ENCODE measurements at regions of chr2 and their contacts with region 1.

Region 1: DNA sequence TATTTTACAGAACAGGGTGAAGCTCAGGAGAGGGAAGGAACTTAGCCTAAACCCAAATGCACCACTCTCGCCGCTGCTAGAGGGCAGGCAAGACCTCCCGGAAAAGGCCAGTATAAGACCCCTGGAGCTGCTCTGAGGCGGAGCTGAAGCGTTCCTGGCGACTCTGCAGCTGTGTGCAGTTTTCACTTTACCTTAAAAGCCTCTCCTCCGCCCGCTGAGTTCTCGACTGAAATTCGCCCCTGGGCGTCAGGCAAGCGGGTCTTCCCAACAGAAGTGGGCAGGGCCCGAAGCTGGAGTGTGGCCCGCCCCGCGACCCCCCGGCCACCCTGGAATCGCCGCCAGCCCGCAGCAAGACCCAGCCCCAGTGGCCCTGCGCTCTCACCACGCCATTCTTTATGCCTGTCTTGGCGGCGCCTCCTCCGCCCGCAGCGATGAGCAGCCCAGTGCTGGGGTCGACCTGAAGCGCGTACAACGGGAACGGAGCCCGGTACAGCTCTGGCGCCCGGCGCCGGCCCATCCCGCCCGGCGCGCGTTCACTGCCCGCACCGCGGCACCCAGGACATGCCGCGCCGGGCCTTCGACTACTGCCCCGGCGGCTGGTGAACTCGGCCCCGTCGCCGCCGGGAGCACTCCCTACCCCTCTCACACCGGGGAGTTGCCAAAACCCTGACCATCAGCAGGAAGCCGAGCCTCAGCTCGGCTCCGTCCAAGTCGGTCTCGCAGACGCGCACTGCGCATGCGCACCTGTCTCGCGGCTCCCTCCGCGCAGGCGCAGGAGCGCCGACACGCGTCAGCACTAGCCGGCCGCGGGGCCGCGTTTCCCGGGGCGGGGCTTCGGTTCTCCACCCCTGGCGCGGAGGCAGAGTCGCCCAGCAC is at the start of gene PREB:
- DNase-seq: peak; percentile 92 to 100 (median 97)
- ATAC-seq: peak; percentile 97
- H3K4me3 ChIP-seq: peak within 1 kb of the TSS; percentile 96
- H3K4me3 Mint-ChIP-seq: peak within 1 kb of the TSS; percentile 88 to 97 (median 92)
- H3K27ac ChIP-seq: peak within 1 kb of the TSS; percentile 97
- H3K27ac Mint-ChIP-seq: peak within 1 kb of the TSS; percentile 88 to 99 (median 97)
- H3K4me1 ChIP-seq: peaks cover 12 to 13% of the 10 kb centered on the region in 2 donors
- H3K4me1 Mint-ChIP-seq: peaks cover 10 to 32% (median 21%) of the 10 kb centered on the region in 7 donors
- H3K27me3 ChIP-seq: no peaks in the 10 kb centered on the region
- H3K27me3 Mint-ChIP-seq: peaks cover 0 to 6% (median 0%) of the 10 kb centered on the region in 5 donors
- total RNA-seq, gene PREB: 25.4 to 72.3 (median 53.2) TPM

Region 2: DNA sequence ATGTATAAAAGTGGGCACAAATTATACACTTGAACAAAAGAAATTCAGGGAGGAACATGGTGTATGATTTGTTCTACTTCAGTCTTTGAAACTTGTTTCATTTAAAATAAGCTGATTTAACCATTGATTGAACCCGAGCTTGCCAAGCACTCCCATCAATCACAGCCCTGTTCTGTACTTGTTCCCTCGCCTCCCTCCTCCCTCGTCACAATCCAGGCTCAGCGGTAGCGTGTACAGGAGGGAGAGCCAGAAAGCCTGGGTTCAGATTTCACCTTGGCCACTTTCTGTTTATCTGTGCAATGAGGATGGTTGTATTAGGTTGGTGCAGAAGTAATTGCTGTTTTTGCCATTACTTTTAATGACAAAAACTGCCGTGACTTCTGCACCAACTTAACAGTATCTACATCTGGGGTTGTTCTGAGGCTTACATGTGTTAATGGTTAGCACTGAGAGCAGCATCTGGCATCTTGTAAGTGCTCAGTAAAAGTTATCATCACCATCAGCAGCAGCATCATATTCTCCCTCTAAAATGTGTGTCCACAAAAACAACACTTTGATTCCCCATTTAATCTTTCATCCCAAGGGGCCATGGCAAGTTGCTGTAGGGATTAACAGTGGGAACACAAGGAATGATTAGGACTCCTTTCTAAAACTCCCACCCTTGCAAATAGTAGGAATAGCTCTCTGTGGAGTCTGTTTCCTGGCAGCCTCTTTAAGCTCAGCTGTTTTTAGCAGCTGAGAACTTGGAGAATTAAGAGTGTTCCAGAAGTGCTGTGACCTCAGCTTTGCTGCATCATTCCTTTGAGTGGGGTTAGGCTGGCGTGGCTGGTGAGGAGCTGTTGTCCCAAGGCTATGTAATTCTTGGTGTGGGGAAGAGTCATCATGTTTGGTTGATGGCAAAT is 281.5 kb before region 1 on chr2:
- CTCF ChIA-PET with region 1: no interaction called
- POLR2A ChIA-PET with region 1: no interaction called
- intact Hi-C with region 1: no loop called
- DNase-seq: no peak
- ATAC-seq: no peak
- H3K4me3 ChIP-seq: no peak overlapping the region
- H3K4me3 Mint-ChIP-seq: no peak overlapping the region
- H3K27ac ChIP-seq: no peak overlapping the region
- H3K27ac Mint-ChIP-seq: no peak overlapping the region
- H3K4me1 ChIP-seq: peaks cover 0 to 11% of the 10 kb centered on the region in 2 donors
- H3K4me1 Mint-ChIP-seq: peaks cover 0 to 14% (median 7%) of the 10 kb centered on the region in 7 donors
- H3K27me3 ChIP-seq: peaks cover 0 to 9% of the 10 kb centered on the region in 2 donors
- H3K27me3 Mint-ChIP-seq: peaks cover 33 to 61% (median 43%) of the 10 kb centered on the region in 5 donors

Region 3: DNA sequence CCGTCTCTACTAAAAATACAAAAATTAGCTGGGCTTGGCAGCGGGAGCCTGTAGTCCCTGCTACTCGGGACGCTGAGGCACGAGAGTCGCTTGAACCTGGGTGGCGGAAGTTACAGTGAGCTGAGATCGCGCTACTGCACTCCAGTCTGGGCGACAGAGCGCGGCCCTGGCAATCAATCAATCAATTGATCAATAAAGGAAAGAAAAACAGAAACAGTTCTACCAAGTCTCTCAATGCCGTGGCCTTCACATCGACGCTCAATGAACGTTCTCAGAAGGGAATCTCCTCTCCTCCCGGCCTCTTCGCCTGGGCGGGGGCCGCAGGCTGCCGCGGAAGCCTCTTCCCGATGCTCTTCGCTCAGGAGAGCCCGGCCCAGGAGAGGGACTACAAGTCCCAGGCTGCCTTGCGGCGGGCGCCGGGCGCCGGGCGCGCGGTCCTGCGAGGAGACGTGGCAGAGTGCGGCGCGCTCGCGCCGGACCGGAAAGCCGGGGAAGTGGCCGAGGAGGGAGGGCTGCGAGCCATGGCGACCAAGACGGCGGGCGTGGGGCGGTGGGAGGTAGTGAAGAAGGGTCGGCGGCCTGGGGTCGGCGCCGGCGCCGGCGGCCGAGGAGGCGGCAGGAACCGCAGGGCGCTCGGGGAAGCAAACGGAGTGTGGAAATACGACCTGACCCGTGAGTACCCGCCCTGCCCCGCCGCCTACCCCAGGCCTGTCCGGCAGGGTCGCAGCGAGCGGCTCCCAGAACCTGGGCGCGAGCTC is 101.5 kb before region 1 on chr2 and contains the start of gene TMEM214:
- CTCF ChIA-PET with region 1: no interaction called
- POLR2A ChIA-PET with region 1: no interaction called
- intact Hi-C with region 1: loop called in 1 of 2 experiments (anchors 2 kb)
- DNase-seq: peak; percentile 54 to 88 (median 63)
- ATAC-seq: peak; percentile 97
- H3K4me3 ChIP-seq: peak within 1 kb of the TSS; percentile 99
- H3K4me3 Mint-ChIP-seq: peak within 1 kb of the TSS; percentile 91 to 97 (median 93)
- H3K27ac ChIP-seq: peak within 1 kb of the TSS; percentile 87
- H3K27ac Mint-ChIP-seq: peak within 1 kb of the TSS; percentile 84 to 95 (median 91)
- H3K4me1 ChIP-seq: peaks cover 11 to 19% of the 10 kb centered on the region in 2 donors
- H3K4me1 Mint-ChIP-seq: peaks cover 24 to 63% (median 41%) of the 10 kb centered on the region in 7 donors
- H3K27me3 ChIP-seq: no peaks in the 10 kb centered on the region
- H3K27me3 Mint-ChIP-seq: no peaks in the 10 kb centered on the region
- total RNA-seq, gene TMEM214: 36.7 to 114 (median 67.5) TPM

Region 4: GRCh38 chr2:27071277-27071989 is 62.7 kb before region 1 on chr2 and contains the start of gene OST4:
- CTCF ChIA-PET with region 1: no interaction called
- POLR2A ChIA-PET with region 1: interaction called, 3 read pairs
- intact Hi-C with region 1: loop called in 1 of 2 experiments (anchors 1 kb)
- DNase-seq: peak; percentile 81 to 97 (median 87)
- ATAC-seq: peak; percentile 96
- H3K4me3 ChIP-seq: peak within 1 kb of the TSS; percentile 83
- H3K4me3 Mint-ChIP-seq: peak within 1 kb of the TSS; percentile 96 to 99 (median 97)
- H3K27ac ChIP-seq: peak within 1 kb of the TSS; percentile 97
- H3K27ac Mint-ChIP-seq: peak within 1 kb of the TSS; percentile 93 to 98 (median 97)
- H3K4me1 ChIP-seq: peaks cover 29 to 41% of the 10 kb centered on the region in 2 donors
- H3K4me1 Mint-ChIP-seq: peaks cover 57 to 86% (median 76%) of the 10 kb centered on the region in 7 donors
- H3K27me3 ChIP-seq: no peaks in the 10 kb centered on the region
- H3K27me3 Mint-ChIP-seq: no peaks in the 10 kb centered on the region
- total RNA-seq, gene OST4: 241 to 398 (median 263) TPM

Region 5: DNA sequence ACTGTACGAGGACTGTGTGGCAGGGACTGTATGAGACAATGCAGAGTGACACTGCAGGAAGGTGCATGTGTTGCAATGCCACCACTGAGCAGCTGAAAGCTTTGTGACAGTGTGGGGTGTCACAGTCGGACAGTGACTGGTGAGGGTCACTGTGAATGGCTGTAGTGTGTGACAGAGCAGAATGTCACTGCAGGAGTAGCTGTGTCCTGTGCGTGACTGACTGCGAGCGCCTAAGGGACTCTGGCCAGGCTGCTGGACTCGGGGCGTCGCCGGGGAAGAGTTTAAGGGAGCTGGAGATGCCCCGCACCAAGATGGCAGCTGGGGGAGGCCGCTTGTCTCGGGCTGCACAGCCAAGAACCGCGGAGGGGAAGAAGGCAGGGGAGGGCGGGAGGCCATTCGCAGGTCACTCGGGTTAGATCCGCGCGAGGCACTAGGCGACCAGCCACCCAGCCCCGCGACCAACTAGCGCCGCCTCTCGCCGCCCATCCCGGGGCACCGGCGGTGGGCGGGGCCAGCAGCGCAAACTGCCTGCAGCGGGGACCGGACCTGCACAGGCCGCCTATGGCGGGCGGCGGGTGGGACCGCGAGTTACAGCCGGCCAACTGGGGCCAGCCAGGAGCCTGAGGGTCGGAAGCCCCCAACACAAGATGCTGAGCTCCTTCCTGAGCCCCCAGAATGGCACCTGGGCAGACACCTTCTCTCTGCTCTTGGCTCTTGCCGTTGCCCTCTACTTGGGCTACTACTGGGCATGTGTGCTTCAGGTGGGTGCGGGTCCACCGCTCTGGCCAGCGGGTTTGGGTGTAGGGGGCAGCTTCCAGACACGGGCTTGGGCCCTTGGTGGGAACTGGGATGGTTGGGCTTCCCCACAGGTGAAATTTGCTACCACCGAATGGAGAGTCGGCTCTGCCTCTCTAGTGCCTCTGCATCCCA is 10.6 kb before region 1 on chr2 and contains the start of gene ABHD1:
- CTCF ChIA-PET with region 1: interaction called, 4 read pairs
- POLR2A ChIA-PET with region 1: interaction called, 49 read pairs
- intact Hi-C with region 1: loop called (anchors 1 kb)
- DNase-seq: peak; percentile 37 to 79 (median 51)
- ATAC-seq: peak; percentile 84
- H3K4me3 ChIP-seq: peak within 1 kb of the TSS; percentile 59
- H3K4me3 Mint-ChIP-seq: peak within 1 kb of the TSS; percentile 83 to 95 (median 92)
- H3K27ac ChIP-seq: peak within 1 kb of the TSS; percentile 61
- H3K27ac Mint-ChIP-seq: peak within 1 kb of the TSS; percentile 78 to 89 (median 86)
- H3K4me1 ChIP-seq: peaks cover 5 to 11% of the 10 kb centered on the region in 2 donors
- H3K4me1 Mint-ChIP-seq: peaks cover 10 to 30% (median 20%) of the 10 kb centered on the region in 7 donors
- H3K27me3 ChIP-seq: peaks cover 0 to 3% of the 10 kb centered on the region in 2 donors
- H3K27me3 Mint-ChIP-seq: peaks cover 11 to 40% (median 14%) of the 10 kb centered on the region in 5 donors
- total RNA-seq, gene ABHD1: 0.53 to 2.0 (median 1.5) TPM

Region 6: DNA sequence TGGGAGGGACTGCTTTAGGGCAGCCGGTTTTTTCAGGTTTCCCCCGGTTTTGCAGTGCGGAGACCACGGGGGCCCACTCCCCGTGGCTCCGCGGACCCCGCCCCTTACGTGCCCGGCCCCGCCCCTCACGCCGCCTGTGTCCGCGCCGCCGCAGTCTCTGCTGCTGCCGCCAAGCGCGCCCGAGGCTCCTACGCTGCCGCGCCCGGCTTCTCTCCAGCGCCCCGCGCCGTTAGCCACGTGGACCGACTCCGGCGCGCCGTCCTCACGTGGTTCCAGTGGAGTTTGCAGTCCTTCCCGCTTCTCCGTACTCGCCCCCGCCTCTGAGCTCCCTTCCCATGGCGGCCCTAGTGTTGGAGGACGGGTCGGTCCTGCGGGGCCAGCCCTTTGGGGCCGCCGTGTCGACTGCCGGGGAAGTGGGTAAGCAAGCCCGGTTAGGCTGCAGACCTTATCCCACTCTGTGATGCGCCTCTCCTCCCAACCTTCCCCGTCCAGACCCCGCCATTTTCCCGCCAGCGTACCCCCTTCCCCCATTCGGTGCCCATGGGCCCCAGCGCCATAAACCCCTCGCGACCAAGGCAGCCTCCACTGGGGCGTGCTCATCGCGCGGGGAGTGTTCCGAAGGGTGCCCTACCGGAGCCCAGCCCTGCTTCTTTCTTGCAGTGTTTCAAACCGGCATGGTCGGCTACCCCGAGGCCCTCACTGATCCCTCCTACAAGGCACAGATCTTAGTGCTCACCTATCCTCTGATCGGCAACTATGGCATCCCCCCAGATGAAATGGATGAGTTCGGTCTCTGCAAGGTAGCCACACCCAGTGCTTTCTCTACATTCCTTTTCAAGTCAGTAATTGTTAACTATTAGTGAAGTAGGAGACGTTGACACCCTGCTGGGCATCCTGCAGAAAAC is 83.3 kb after region 1 on chr2 and contains the start of gene CAD:
- CTCF ChIA-PET with region 1: interaction called, 4 read pairs
- POLR2A ChIA-PET with region 1: interaction called, 5 read pairs
- intact Hi-C with region 1: loop called (anchors 1 kb)
- DNase-seq: peak; percentile 71 to 90 (median 80)
- ATAC-seq: peak; percentile 87
- H3K4me3 ChIP-seq: peak within 1 kb of the TSS; percentile 68
- H3K4me3 Mint-ChIP-seq: peak within 1 kb of the TSS; percentile 90 to 98 (median 96)
- H3K27ac ChIP-seq: peak within 1 kb of the TSS; percentile 85
- H3K27ac Mint-ChIP-seq: peak within 1 kb of the TSS; percentile 86 to 96 (median 94)
- H3K4me1 ChIP-seq: peaks cover 19 to 24% of the 10 kb centered on the region in 2 donors
- H3K4me1 Mint-ChIP-seq: peaks cover 26 to 52% (median 45%) of the 10 kb centered on the region in 7 donors
- H3K27me3 ChIP-seq: no peaks in the 10 kb centered on the region
- H3K27me3 Mint-ChIP-seq: no peaks in the 10 kb centered on the region
- total RNA-seq, gene CAD: 34.4 to 65.7 (median 45.4) TPM

Region 7: DNA sequence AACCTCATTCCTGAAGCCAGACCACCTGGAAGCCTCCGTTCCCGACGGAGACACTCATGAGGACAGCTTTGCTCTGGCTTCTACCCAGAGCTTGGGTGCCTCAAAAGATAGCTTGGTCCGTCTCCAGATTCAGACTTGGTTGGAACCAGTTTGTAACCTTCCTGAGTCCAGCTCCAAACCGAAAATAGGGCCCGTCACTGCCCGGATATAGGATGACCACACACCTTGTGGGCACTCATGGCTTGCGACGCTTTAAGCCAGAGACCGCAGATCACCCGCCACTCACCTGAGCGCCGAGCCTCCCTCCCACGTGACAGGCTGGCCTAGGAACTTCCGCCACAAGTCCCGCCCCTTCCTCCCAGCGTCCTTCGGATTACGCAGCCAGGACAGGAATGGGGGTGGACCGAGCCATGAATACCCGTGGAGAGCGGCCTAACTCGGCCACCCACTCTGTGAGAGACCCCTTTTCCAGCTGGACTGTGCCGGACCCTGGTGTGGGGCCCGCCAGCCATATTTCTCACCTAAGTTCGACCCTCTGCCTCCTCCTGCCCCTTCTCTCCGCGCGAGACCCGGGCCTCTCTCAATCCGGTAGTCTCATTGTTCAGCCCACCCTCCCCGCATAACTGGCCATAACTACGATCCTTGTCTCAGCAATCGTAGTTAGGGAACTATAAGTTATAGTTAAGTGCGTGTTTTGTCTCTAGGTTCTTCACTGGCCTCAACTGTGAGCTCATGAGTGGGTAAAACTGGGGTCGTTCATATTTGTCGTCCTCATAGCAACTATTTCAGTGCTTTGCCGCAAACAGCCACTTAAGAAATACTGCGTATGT is 188.8 kb after region 1 on chr2 and contains the start of gene MPV17:
- CTCF ChIA-PET with region 1: no interaction called
- POLR2A ChIA-PET with region 1: no interaction called
- intact Hi-C with region 1: loop called (anchors 1 to 2 kb)
- DNase-seq: peak; percentile 65 to 87 (median 82)
- ATAC-seq: peak; percentile 98
- H3K4me3 ChIP-seq: peak within 1 kb of the TSS; percentile 99
- H3K4me3 Mint-ChIP-seq: peak within 1 kb of the TSS; percentile 91 to 100 (median 99)
- H3K27ac ChIP-seq: peak within 1 kb of the TSS; percentile 95
- H3K27ac Mint-ChIP-seq: peak within 1 kb of the TSS; percentile 93 to 100 (median 99)
- H3K4me1 ChIP-seq: peaks cover 17 to 22% of the 10 kb centered on the region in 2 donors
- H3K4me1 Mint-ChIP-seq: peaks cover 14 to 30% (median 23%) of the 10 kb centered on the region in 7 donors
- H3K27me3 ChIP-seq: no peaks in the 10 kb centered on the region
- H3K27me3 Mint-ChIP-seq: no peaks in the 10 kb centered on the region
- total RNA-seq, gene MPV17: 55.7 to 119 (median 94.4) TPM

Region 8: GRCh38 chr2:27489498-27490397 is 355.6 kb after region 1 on chr2 and contains the start of gene IFT172:
- CTCF ChIA-PET with region 1: no interaction called
- POLR2A ChIA-PET with region 1: no interaction called
- intact Hi-C with region 1: loop called in 1 of 2 experiments (anchors 1 kb)
- DNase-seq: peak; percentile 90 to 100 (median 99)
- ATAC-seq: peak; percentile 96
- H3K4me3 ChIP-seq: peak within 1 kb of the TSS; percentile 63
- H3K4me3 Mint-ChIP-seq: peak within 1 kb of the TSS; percentile 78 to 92 (median 84)
- H3K27ac ChIP-seq: peak within 1 kb of the TSS; percentile 80
- H3K27ac Mint-ChIP-seq: peak within 1 kb of the TSS; percentile 82 to 99 (median 98)
- H3K4me1 ChIP-seq: peaks cover 11 to 16% of the 10 kb centered on the region in 2 donors
- H3K4me1 Mint-ChIP-seq: peaks cover 8 to 29% (median 19%) of the 10 kb centered on the region in 7 donors
- H3K27me3 ChIP-seq: peaks cover 0 to 7% of the 10 kb centered on the region in 2 donors
- H3K27me3 Mint-ChIP-seq: peaks cover 13 to 20% (median 17%) of the 10 kb centered on the region in 5 donors
- total RNA-seq, gene IFT172: 12.3 to 35.8 (median 22.2) TPM